IMR-90 (cell line): ENCODE measurements at regions of chr1 and their contacts with region 1.

Region 1: GRCh38 chr1:85799737-85800136 is 91.5 kb upstream of the ZNHIT6 start:
- DNase-seq: no peak
- ATAC-seq: no peak
- H3K4me3 ChIP-seq: no peak overlapping the region
- H3K27ac ChIP-seq: no peak overlapping the region
- H3K4me1 ChIP-seq: no peaks in the 10 kb centered on the region
- H3K27me3 ChIP-seq: no peaks in the 10 kb centered on the region
- CTCF ChIP-seq: no peak
- POLR2A ChIP-seq: no peak
- RAD21 ChIP-seq: no peak

Region 2: DNA sequence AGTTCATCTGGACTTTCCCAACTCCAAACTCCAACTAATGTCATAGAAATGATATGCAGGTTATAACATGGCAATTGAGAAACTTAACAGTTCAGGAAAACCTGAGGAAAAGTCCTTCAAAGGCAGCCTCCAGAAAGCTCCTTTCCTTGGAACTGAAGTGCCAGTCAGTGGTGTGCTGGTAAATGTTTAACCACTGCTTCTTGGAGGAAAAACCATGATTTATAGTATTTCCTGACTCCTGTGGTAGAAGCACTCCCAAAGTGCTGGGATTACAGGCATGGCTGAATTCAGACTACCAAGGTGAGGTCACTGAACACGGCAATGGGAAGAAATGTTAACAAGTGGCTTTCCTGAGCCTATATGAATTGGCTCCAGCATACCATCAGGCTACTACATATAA is 64.8 kb before region 1 on chr1:
- CTCF ChIA-PET with region 1: no interaction called
- POLR2A ChIA-PET with region 1: no interaction called
- dilution Hi-C with region 1: no loop called
- in situ Hi-C with region 1: no loop called
- intact Hi-C with region 1: loop called (anchors 5 kb)
- DNase-seq: no peak
- ATAC-seq: no peak
- H3K4me3 ChIP-seq: no peak overlapping the region
- H3K27ac ChIP-seq: no peak overlapping the region
- H3K4me1 ChIP-seq: no peaks in the 10 kb centered on the region
- H3K27me3 ChIP-seq: no peaks in the 10 kb centered on the region
- CTCF ChIP-seq: no peak
- POLR2A ChIP-seq: no peak
- RAD21 ChIP-seq: no peak

Region 3: GRCh38 chr1:86259390-86259789 is 459.7 kb after region 1 on chr1:
- CTCF ChIA-PET with region 1: no interaction called
- POLR2A ChIA-PET with region 1: no interaction called
- dilution Hi-C with region 1: no loop called
- in situ Hi-C with region 1: no loop called
- intact Hi-C with region 1: loop called (anchors 10 kb)
- DNase-seq: peak; percentile 53
- ATAC-seq: peak; percentile 35; the same call in 1 of the 2 replicates
- H3K4me3 ChIP-seq: no peak overlapping the region
- H3K27ac ChIP-seq: no peak overlapping the region
- H3K4me1 ChIP-seq: no peaks in the 10 kb centered on the region
- H3K27me3 ChIP-seq: peaks cover 1% of the 10 kb centered on the region; the same call in 1 of the 2 replicates
- CTCF ChIP-seq: no peak
- POLR2A ChIP-seq: no peak
- RAD21 ChIP-seq: no peak